ENCODE measurements at regions of chr15 and their contacts with region 1.

Region 1: DNA sequence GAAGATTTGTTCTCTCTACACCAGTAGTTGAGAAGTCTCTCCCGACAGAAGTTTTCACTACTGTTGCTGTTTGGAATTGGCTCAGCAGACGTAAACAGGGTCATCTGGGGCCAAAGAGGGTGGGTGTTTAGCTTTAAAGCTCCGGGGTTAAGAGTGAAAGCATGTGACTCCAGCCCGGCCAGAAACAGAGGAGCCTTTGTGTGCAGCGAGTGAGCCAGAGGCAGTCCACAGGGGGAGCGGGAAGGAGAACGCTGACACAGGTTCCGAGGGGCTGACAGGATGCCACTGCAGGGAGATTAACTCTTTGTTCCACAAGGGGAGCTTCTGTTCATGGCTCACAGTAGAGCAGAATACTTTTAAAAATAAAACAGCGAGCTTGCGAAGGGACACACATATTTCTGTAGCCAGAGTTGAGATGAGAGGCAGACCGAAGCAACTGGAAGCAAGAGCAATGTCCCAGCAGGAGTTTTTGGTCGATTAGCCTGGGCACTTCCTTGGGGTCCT is 26.9 kb downstream of the BMF start:
- H3K4me3 ChIP-seq: no peak overlapping the region
- H3K27ac ChIP-seq: peak overlapping the region; percentile 67
- H3K4me1 ChIP-seq: peaks cover 5% of the 10 kb centered on the region
- CTCF ChIP-seq: peak; percentile 28; the same call in 1 of the 2 replicates

Region 2: GRCh38 chr15:40098489-40099261 is 16.9 kb after region 1 on chr15:
- CTCF ChIA-PET with region 1: interaction called, 4 read pairs
- POLR2A ChIA-PET with region 1: interaction called, 12 read pairs
- H3K4me3 ChIP-seq: no peak overlapping the region
- H3K27ac ChIP-seq: peak overlapping the region; percentile 98
- H3K4me1 ChIP-seq: peaks cover 68% of the 10 kb centered on the region
- CTCF ChIP-seq: no peak

Region 3: GRCh38 chr15:40115670-40116093 is 33.9 kb after region 1 on chr15:
- CTCF ChIA-PET with region 1: no interaction called
- POLR2A ChIA-PET with region 1: no interaction called
- H3K4me3 ChIP-seq: no peak overlapping the region
- H3K27ac ChIP-seq: no peak overlapping the region
- H3K4me1 ChIP-seq: no peaks in the 10 kb centered on the region; the same call in 1 of the 2 replicates
- CTCF ChIP-seq: no peak

Region 4: GRCh38 chr15:40150163-40150925 is 68.6 kb after region 1 on chr15:
- CTCF ChIA-PET with region 1: no interaction called
- POLR2A ChIA-PET with region 1: no interaction called
- H3K4me3 ChIP-seq: no peak overlapping the region
- H3K27ac ChIP-seq: no peak overlapping the region
- H3K4me1 ChIP-seq: 0 out of 2 replicates have a peak, but pooled peaks cover 3% of the 10 kb centered on the region
- CTCF ChIP-seq: no peak

Measured in HEK293 (cell line).